CD4-positive, alpha-beta memory T cell (primary cell): ENCODE measurements at regions of chr19 and their contacts with region 1.

Region 1: GRCh38 chr19:18521885-18522624 is at the start of gene ELL:
- DNase-seq: peak; percentile 100
- H3K4me3 ChIP-seq: peak within 1 kb of the TSS; percentile 88 to 96
- H3K4me3 Mint-ChIP-seq: peak within 1 kb of the TSS; percentile 93 to 100 (median 98)
- H3K27ac ChIP-seq: peak within 1 kb of the TSS; percentile 96
- H3K27ac Mint-ChIP-seq: peak within 1 kb of the TSS; percentile 94 to 99 (median 98)
- H3K4me1 ChIP-seq: peaks cover 33% of the 10 kb centered on the region
- H3K4me1 Mint-ChIP-seq: peaks cover 6 to 36% (median 22%) of the 10 kb centered on the region in 4 donors
- H3K27me3 ChIP-seq: no peaks in the 10 kb centered on the region
- H3K27me3 Mint-ChIP-seq: no peaks in the 10 kb centered on the region
- total RNA-seq, gene ELL: 34.9 to 35.9 TPM

Region 2: GRCh38 chr19:18446145-18446815 is 75.8 kb before region 1 on chr19:
- CTCF ChIA-PET with region 1: no interaction called
- POLR2A ChIA-PET with region 1: no interaction called
- intact Hi-C with region 1: no loop called
- DNase-seq: no peak
- H3K4me3 ChIP-seq: no peak overlapping the region
- H3K4me3 Mint-ChIP-seq: no peak overlapping the region
- H3K27ac ChIP-seq: no peak overlapping the region
- H3K27ac Mint-ChIP-seq: peak overlapping the region in 1 of 7 donors; percentile 60
- H3K4me1 ChIP-seq: peaks cover 23% of the 10 kb centered on the region
- H3K4me1 Mint-ChIP-seq: peaks cover 14 to 35% (median 21%) of the 10 kb centered on the region in 4 donors
- H3K27me3 ChIP-seq: no peaks in the 10 kb centered on the region
- H3K27me3 Mint-ChIP-seq: no peaks in the 10 kb centered on the region

Region 3: GRCh38 chr19:18469069-18469846 is 52.8 kb before region 1 on chr19:
- CTCF ChIA-PET with region 1: interaction called, 50 read pairs
- POLR2A ChIA-PET with region 1: interaction called, 42 read pairs
- intact Hi-C with region 1: no loop called
- DNase-seq: peak; percentile 45 to 59 (median 56)
- H3K4me3 ChIP-seq: no peak overlapping the region
- H3K4me3 Mint-ChIP-seq: peak overlapping the region in 1 of 8 donors; percentile 25
- H3K27ac ChIP-seq: no peak overlapping the region
- H3K27ac Mint-ChIP-seq: peak overlapping the region in 6 of 7 donors; percentile 42 to 84 (median 80)
- H3K4me1 ChIP-seq: peaks cover 47% of the 10 kb centered on the region
- H3K4me1 Mint-ChIP-seq: peaks cover 15 to 52% (median 32%) of the 10 kb centered on the region in 4 donors
- H3K27me3 ChIP-seq: no peaks in the 10 kb centered on the region
- H3K27me3 Mint-ChIP-seq: no peaks in the 10 kb centered on the region

Region 4: GRCh38 chr19:18484992-18485391 is 37.1 kb before region 1 on chr19:
- CTCF ChIA-PET with region 1: interaction called, 131 read pairs
- POLR2A ChIA-PET with region 1: interaction called, 13 read pairs
- intact Hi-C with region 1: no loop called
- DNase-seq: no peak
- H3K4me3 ChIP-seq: no peak overlapping the region
- H3K4me3 Mint-ChIP-seq: peak overlapping the region in 2 of 8 donors; percentile 13 to 15
- H3K27ac ChIP-seq: peak overlapping the region; percentile 13
- H3K27ac Mint-ChIP-seq: peak overlapping the region; percentile 41 to 90 (median 64)
- H3K4me1 ChIP-seq: peaks cover 82% of the 10 kb centered on the region
- H3K4me1 Mint-ChIP-seq: peaks cover 31 to 96% (median 72%) of the 10 kb centered on the region in 4 donors
- H3K27me3 ChIP-seq: no peaks in the 10 kb centered on the region
- H3K27me3 Mint-ChIP-seq: no peaks in the 10 kb centered on the region

Region 5: GRCh38 chr19:18503971-18504885 is 17.8 kb before region 1 on chr19:
- CTCF ChIA-PET with region 1: interaction called, 131 read pairs
- POLR2A ChIA-PET with region 1: interaction called, 83 read pairs
- intact Hi-C with region 1: loop called (anchors 2 kb)
- DNase-seq: no peak
- H3K4me3 ChIP-seq: no peak overlapping the region
- H3K4me3 Mint-ChIP-seq: peak overlapping the region in 6 of 8 donors; percentile 13 to 88 (median 60)
- H3K27ac ChIP-seq: peak overlapping the region; percentile 56
- H3K27ac Mint-ChIP-seq: peak overlapping the region; percentile 55 to 97 (median 80)
- H3K4me1 ChIP-seq: peaks cover 100% of the 10 kb centered on the region
- H3K4me1 Mint-ChIP-seq: peaks cover 70 to 100% (median 88%) of the 10 kb centered on the region in 4 donors
- H3K27me3 ChIP-seq: no peaks in the 10 kb centered on the region
- H3K27me3 Mint-ChIP-seq: no peaks in the 10 kb centered on the region

Region 6: DNA sequence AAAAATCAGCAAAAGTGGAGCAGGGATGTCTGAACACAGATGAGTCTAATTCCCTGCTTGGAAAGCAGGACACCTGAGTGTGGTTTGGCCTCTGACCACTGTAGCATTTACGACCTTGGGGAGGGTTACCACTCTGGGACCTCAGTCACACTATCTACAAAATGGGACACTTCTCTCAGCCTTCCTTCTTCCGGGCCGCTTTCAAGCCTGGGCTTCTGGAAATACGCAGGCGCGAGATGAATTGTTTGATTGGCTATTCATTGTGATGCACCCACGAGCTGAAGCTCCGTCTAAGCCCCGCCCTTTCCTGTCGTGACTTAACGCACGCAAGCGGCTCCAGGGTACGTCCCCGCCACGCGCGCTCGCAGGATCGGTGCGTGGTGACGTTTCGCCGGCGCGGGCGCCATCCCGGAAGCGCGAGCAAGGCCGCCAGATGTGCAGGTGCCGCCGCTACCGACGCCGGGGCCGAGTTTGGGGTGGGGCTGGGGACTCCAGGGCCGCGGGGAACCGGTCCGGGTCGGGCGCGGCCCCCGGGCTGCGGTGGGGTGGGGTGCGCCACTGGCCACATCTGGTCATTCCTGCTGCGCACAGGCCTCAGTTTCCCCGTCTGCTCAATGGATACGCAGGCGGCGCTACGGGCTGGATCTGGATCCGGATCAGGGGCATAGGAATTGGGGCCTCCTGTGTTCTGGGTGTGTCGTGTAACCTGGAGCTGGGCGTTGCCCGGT is 35.6 kb after region 1 on chr19 and contains the start of gene KXD1:
- CTCF ChIA-PET with region 1: interaction called, 29 read pairs
- POLR2A ChIA-PET with region 1: interaction called, 63 read pairs
- intact Hi-C with region 1: loop called (anchors 1 kb)
- DNase-seq: peak; percentile 95 to 100 (median 99)
- H3K4me3 ChIP-seq: peak within 1 kb of the TSS; percentile 81 to 97
- H3K4me3 Mint-ChIP-seq: peak within 1 kb of the TSS; percentile 86 to 97 (median 93)
- H3K27ac ChIP-seq: peak within 1 kb of the TSS; percentile 98
- H3K27ac Mint-ChIP-seq: peak within 1 kb of the TSS; percentile 94 to 98 (median 96)
- H3K4me1 ChIP-seq: peaks cover 25% of the 10 kb centered on the region
- H3K4me1 Mint-ChIP-seq: peaks cover 9 to 35% (median 17%) of the 10 kb centered on the region in 4 donors
- H3K27me3 ChIP-seq: no peaks in the 10 kb centered on the region
- H3K27me3 Mint-ChIP-seq: no peaks in the 10 kb centered on the region
- total RNA-seq, gene KXD1: 95.3 to 95.6 TPM

Region 7: DNA sequence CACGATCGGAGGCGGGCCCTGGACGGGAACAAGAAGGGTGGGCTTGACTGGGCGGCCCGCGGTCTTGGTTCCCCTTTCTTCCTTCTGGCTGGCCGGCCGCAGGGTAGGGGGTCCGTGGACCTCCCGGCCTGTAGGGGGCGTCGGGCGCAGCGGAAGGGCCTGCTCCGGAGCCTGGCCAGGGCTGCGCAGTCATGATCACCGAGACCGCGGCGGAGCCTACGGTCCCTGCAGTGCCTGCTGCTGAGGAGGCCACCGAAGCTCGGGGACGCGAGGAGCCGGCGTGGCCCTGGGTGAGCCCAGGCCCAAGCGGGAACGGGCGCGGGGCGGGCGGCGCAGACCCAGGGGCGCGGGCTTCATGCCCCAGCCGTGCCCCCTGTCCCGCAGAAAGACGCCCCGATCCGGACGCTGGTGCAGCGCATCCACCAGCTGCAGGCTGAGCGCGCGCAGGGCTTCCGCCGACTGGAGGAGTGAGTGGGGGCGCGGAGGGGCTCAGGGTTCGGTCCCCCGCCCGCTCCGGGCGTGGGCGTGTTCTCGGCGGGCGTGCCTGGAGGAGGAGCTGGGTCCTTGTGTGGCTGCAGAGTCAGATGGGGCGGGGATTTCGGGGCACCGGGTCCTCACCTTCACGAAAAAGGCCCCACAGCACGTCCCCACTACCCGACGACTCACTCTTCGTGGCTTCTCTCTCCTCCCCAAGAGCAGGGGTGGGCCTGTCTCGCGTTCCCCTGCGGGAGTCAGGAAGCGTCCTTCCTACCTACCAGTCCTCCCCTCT is 66.7 kb after region 1 on chr19 and contains the start of gene REX1BD:
- CTCF ChIA-PET with region 1: interaction called, 58 read pairs
- POLR2A ChIA-PET with region 1: interaction called, 48 read pairs
- intact Hi-C with region 1: loop called (anchors 1 kb)
- DNase-seq: peak; percentile 86 to 95 (median 87)
- H3K4me3 ChIP-seq: peak within 1 kb of the TSS; percentile 47 to 79
- H3K4me3 Mint-ChIP-seq: peak within 1 kb of the TSS; percentile 82 to 93 (median 89)
- H3K27ac ChIP-seq: peak within 1 kb of the TSS; percentile 67
- H3K27ac Mint-ChIP-seq: peak within 1 kb of the TSS; percentile 83 to 96 (median 92)
- H3K4me1 ChIP-seq: peaks cover 36% of the 10 kb centered on the region
- H3K4me1 Mint-ChIP-seq: peaks cover 21 to 48% (median 35%) of the 10 kb centered on the region in 4 donors
- H3K27me3 ChIP-seq: no peaks in the 10 kb centered on the region
- H3K27me3 Mint-ChIP-seq: no peaks in the 10 kb centered on the region
- total RNA-seq, gene REX1BD: 150 to 154 TPM

Region 8: GRCh38 chr19:18636183-18636968 is 114.3 kb after region 1 on chr19:
- CTCF ChIA-PET with region 1: no interaction called
- POLR2A ChIA-PET with region 1: no interaction called
- intact Hi-C with region 1: loop called (anchors 1 kb)
- DNase-seq: peak; percentile 97 to 99 (median 99)
- H3K4me3 ChIP-seq: peak overlapping the region; percentile 47 to 82
- H3K4me3 Mint-ChIP-seq: peak overlapping the region; percentile 84 to 90 (median 88)
- H3K27ac ChIP-seq: peak overlapping the region; percentile 84
- H3K27ac Mint-ChIP-seq: peak overlapping the region; percentile 77 to 96 (median 94)
- H3K4me1 ChIP-seq: peaks cover 24% of the 10 kb centered on the region
- H3K4me1 Mint-ChIP-seq: peaks cover 20 to 45% (median 33%) of the 10 kb centered on the region in 4 donors
- H3K27me3 ChIP-seq: no peaks in the 10 kb centered on the region
- H3K27me3 Mint-ChIP-seq: peaks cover 0 to 2% of the 10 kb centered on the region in 2 donors